GM18951 (cell line): ENCODE measurements at regions of chr12 and their contacts with region 1.

Region 1: GRCh38 chr12:112382232-112382796 is at the start of gene HECTD4:
- POLR2A ChIP-seq: peak; percentile 96

Region 2: DNA sequence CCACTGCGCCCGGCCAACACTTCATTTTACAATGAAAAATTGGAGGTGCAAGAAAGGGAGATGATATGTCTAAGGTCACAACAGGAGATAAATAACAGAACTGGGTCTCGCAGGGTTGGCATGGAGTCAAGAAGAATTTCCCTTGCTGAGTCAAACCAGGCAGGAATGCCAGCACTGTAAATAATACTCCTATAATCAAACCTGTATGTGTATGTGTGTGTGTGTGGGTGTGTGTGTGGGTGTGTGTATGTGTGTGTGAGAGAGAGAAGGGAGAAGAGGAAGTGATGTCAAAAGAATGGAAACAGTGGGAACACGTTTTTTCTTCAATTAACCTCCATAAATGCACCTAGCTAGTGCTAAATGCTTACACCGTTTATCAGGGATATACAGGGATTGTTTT is 439.8 kb before region 1 on chr12:
- in situ Hi-C with region 1: loop called (anchors 25 kb)
- POLR2A ChIP-seq: no peak

Region 3: DNA sequence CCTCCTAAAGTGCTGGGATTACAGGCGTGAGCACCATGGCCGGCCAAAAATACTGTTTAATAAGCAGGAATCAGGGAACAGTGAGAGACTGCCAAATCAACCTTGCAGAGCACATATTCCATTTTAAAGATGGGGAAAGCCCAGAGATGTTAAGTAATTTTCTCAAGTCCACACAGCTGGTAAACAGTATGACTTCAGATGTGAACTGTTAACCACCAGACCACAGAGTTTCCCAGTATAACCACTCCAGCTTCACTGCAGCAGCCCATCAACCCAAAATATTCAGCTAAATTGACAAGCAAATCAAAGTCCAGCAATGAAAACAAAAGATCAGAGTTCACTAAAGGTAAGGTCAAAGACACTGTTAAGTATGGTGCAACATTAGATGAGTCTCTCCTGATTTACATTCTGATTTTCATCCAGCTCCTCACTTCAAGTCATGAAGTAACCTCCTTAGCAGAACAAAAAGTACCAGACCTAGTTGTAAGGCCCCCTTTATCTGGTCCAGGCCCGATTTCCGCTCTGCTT is 174.9 kb before region 1 on chr12:
- in situ Hi-C with region 1: loop called (anchors 10 kb)
- POLR2A ChIP-seq: no peak